ENCODE measurements at regions of chr1 and their contacts with region 1.

Region 1: DNA sequence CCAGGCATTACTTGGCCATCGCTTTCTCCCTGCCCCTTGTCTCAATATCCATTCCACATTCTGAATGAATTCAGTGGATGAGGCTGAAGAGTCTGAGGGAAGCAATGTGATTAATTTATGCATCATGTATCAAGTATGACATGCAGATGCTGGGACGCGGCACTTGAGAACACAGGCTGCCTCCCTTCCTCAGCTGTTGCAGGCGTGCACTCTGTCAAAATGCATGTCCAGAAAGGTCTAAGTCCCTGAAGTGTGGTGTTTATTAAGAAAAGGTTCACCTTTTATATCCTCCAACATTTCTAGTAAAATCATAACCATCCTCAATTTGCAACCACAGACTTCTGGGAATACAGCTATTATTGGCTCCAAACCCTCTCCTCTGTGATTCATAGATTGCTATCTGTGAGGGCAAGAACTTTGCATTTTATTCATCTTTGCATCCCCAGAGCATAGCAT is 22.6 kb upstream of the RAB3GAP2 start:
- DNase-seq: no peak
- ATAC-seq: no peak

Region 2: GRCh38 chr1:220151454-220151853 is 143.4 kb before region 1 on chr1:
- intact Hi-C with region 1: no loop called
- DNase-seq: peak; percentile 51
- ATAC-seq: peak; percentile 85 to 90

Region 3: GRCh38 chr1:220511768-220512167 is 216.9 kb after region 1 on chr1:
- intact Hi-C with region 1: loop called in 1 of 2 experiments (anchors 10 kb)
- DNase-seq: peak; percentile 23
- ATAC-seq: peak; percentile 66 to 78

Region 4: GRCh38 chr1:220631238-220631832 is 336.5 kb after region 1 on chr1:
- intact Hi-C with region 1: no loop called
- DNase-seq: no peak
- ATAC-seq: no peak

Measured in left cardiac atrium (tissue), 4 donors.